A549 (cell line): ENCODE measurements at regions of chr6 and their contacts with region 1.

Region 1: DNA sequence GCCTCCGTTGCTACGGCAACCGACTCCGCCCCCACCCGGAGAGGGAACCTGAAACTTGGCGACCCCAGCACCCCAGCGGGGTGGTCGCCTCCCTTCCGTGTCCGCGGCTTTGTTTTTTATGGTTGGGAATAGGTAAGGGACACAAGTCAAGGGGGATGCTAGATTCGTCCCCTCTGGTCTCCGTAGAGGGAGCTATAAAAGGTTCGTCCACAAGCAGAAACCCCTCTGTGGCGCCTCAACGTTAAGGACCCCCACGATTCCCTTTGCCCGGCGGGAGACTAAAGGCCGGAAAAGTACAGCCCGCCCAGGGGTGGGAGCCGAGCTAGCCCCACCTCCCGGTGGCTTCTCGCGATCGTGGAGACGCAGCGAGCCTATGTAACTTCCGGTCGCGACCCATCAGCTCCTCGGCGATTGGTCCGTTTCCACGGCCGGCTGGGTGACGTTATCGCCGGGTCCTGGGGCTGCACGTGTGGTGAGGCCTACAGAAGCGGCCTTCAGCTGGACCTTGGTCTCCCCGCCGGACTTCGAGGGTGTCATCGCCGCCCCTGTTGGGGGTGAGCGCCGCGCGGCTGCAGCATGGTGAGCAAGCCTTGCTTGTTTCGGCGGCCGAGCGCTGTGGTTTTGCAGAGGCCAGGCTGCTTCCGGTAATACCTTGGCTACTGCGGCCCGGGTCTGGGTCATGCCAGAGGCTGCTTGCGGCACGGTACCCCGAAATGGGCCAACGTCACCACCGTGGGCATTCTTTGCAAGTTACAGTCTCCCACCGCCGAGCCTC is at the start of gene LTV1:
- DNase-seq: peak; percentile 91 to 95
- ATAC-seq: peak; percentile 99 to 100
- H3K4me3 ChIP-seq: peak within 1 kb of the TSS; percentile 96
- H3K27ac ChIP-seq: peak within 1 kb of the TSS; percentile 92 to 98
- H3K4me1 ChIP-seq: peaks cover 10% of the 10 kb centered on the region; the same call in 2 of the 3 replicates
- CTCF ChIP-seq: no peak
- EP300 ChIP-seq: no peak
- POLR2A ChIP-seq: peak; percentile 39
- RAD21 ChIP-seq: no peak
- polyA plus RNA-seq, gene LTV1: 30.3 and 50.7 TPM in 2 replicates

Region 2: DNA sequence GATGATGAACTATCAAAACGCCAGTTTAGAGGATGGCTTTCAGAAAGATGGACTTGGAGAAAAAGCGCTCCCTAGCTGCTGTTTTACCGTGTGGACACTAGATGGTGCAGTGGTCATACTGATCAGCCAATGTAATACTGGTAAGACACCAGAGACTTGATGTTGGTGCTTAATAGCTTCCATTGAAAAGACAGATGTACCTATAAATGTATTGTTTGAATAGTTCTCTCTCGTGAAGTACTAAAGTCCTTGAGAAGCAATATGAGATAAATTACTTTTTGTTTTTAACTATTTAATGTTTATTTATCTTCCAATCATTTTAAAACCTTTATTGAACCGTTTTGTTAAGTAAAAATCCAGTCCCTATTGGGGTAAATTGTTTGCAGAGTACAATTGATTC is 267.6 kb before region 1 on chr6:
- CTCF ChIA-PET with region 1: interaction called, 5 read pairs
- POLR2A ChIA-PET with region 1: interaction called, 10 read pairs
- DNase-seq: peak; percentile 73 to 77
- ATAC-seq: peak; percentile 73 to 84
- H3K4me3 ChIP-seq: no peak overlapping the region
- H3K27ac ChIP-seq: no peak overlapping the region
- H3K4me1 ChIP-seq: no peaks in the 10 kb centered on the region
- CTCF ChIP-seq: peak; percentile 79
- EP300 ChIP-seq: no peak
- POLR2A ChIP-seq: no peak
- RAD21 ChIP-seq: peak; percentile 89 to 90